Heart right ventricle (tissue), 16 donors: ENCODE measurements at regions of chr22 and their contacts with region 1.

Region 1: DNA sequence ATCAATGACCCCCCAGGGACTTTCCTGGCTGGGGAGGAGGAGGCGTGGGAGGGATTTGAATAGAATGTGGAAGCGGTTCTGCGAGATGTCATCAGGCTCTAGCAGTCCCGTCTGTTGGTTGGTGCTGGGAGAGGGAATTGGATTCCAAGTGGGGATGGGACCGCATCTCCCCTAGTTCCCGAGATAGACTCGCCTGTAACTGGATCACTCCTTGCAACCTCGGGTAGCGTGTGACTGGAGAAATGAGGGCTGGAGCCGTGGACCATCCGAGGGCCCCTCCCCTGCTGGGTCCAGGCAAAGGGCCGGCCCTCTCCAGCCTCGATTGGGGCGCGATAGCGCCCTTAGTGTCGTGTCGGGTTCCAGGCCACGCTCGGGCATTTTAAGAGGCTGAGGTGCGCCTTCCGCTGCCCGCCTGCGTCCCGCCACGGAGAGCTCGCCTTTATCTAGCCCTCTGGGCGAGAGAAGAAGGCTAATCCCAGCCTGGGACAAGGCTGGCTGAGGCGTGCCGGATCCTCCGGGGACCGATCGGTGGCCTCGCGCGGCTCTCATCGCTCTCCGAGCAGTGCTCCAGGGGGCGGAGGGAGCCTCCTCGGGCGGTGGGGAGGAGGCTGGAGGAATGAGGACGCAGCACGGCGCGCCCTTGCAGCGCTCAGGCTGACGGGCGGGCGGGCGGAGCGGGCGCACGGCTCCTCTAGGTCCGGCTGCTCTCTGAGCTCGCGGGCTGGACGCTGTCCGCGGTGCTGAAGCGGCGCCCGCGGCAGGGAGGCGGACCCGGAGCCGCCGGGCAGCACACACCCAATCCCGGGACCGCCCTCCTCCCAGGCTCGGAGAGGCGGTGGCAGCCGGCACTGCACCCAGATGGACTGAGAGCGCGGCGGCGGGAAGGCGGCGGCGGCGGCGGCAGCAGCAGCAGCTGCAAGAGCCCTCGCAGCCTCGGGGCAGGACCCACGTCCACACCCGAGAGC is 107.8 kb downstream of the OSBP2 start:
- DNase-seq: peak; percentile 78 to 86
- ATAC-seq: peak; percentile 99 to 100 (median 100)
- H3K4me3 ChIP-seq: peak overlapping the region in 7 of 10 donors; percentile 24 to 45 (median 34)
- H3K27ac ChIP-seq: no peak overlapping the region
- H3K4me1 ChIP-seq: peaks cover 4 to 16% (median 13%) of the 10 kb centered on the region in 9 donors
- H3K27me3 ChIP-seq: peaks cover 0 to 48% (median 21%) of the 10 kb centered on the region in 7 donors
- CTCF ChIP-seq: peak; percentile 6 to 61 (median 32)

Region 2: GRCh38 chr22:30824081-30824480 is 21.6 kb after region 1 on chr22:
- intact Hi-C with region 1: loop called in 1 of 10 experiments (anchors 1 kb)
- DNase-seq: no peak
- ATAC-seq: no peak
- H3K4me3 ChIP-seq: no peak overlapping the region
- H3K27ac ChIP-seq: no peak overlapping the region
- H3K4me1 ChIP-seq: peaks cover 0 to 14% (median 10%) of the 10 kb centered on the region in 9 donors
- H3K27me3 ChIP-seq: peaks cover 0 to 52% (median 40%) of the 10 kb centered on the region in 7 donors
- CTCF ChIP-seq: no peak